Activated CD4-positive, alpha-beta memory T cell treated with anti-CD3 and anti-CD28 coated beads for 36 hours (primary cell): ENCODE measurements at regions of chr5 and their contacts with region 1.

Region 1: DNA sequence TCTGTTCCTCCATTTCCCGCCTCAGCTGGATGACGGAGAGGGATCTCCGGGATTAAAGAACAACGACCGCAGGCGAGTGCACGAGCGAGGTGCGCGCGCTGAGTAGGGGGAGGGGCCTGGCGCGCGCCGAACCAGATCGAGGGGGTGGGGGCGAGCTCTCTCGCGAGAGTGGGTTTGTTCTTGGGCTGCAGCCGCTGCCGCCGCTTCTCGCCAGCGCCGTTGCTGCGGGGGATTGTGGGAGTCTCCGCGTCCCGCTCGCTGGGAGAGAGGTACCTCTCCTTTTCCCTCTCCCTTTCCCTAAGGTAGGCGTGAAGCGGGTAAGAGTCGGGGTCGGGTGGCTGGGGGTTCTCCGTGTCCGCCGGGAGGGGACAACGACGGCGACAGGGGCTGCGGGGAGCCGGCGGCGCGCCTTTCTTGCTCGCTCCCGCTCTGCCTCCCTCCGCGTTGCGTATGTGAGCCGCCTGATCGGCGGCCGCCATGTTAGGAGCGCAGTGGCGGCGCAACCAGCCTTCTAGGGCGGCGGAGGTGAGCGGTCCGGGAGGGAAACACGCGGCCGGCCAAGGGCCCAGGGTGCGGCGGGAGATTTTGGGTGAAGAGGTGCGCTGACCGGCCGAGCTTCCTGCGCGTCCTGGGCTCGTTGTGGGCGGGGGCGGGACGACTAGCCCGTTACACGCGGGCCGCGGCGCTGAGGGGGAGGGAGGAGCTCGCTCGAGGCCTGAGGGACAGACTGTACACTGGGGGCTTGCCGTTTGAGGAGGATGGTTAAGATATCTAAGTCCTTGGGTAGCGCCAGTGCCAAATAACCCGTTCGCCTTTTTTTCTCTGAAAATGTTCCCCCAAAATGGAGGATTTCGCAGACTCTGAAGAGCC is at the start of gene MATR3:
- DNase-seq: peak; percentile 96
- H3K4me3 Mint-ChIP-seq: peak within 1 kb of the TSS; percentile 95
- H3K27ac Mint-ChIP-seq: peak within 1 kb of the TSS; percentile 98
- H3K4me1 Mint-ChIP-seq: peaks cover 31% of the 10 kb centered on the region
- H3K27me3 Mint-ChIP-seq: no peaks in the 10 kb centered on the region
- total RNA-seq, gene MATR3: 163 to 179 TPM

Region 2: DNA sequence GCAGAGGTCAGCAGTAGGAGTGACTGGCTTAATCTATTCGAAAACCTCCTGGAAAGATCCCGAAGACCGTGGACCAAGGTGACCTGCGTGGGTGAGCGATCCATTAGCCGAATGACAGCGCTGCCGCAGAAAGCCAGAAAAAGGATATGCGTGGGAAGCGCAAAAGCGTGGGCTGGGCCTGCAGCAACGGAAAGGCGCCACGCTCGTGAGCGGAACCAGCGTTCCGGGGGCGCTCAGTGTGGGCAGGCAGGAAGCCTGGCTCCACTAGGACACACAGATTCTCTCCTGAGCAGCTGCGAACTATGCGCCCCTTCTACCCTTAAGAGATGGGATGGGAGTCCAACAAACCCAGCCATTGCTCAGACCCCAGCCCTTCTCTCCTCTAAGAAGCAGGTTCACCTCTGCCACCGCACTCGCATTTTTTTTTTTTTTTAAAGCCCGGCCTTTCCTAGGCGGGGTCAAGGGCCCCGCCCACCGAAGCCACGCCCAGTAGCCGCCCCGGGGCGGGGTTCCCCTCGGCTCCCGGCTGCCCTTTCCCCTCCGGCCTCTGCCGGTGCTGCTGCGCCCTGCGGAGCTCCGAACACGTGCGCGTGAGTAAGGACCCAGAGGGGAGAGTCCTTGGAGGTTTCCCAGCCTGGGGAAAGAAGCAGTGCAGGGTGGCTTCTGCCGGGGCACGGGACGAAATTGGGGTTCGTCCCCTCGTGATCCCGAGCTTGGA is 20.0 kb before region 1 on chr5:
- CTCF ChIA-PET with region 1: interaction called, 5 read pairs
- POLR2A ChIA-PET with region 1: interaction called, 112 read pairs
- intact Hi-C with region 1: loop called (anchors 1 kb)
- DNase-seq: peak; percentile 93
- H3K4me3 Mint-ChIP-seq: peak overlapping the region; percentile 96
- H3K27ac Mint-ChIP-seq: peak overlapping the region; percentile 89
- H3K4me1 Mint-ChIP-seq: peaks cover 60% of the 10 kb centered on the region
- H3K27me3 Mint-ChIP-seq: peaks cover 2% of the 10 kb centered on the region

Region 3: DNA sequence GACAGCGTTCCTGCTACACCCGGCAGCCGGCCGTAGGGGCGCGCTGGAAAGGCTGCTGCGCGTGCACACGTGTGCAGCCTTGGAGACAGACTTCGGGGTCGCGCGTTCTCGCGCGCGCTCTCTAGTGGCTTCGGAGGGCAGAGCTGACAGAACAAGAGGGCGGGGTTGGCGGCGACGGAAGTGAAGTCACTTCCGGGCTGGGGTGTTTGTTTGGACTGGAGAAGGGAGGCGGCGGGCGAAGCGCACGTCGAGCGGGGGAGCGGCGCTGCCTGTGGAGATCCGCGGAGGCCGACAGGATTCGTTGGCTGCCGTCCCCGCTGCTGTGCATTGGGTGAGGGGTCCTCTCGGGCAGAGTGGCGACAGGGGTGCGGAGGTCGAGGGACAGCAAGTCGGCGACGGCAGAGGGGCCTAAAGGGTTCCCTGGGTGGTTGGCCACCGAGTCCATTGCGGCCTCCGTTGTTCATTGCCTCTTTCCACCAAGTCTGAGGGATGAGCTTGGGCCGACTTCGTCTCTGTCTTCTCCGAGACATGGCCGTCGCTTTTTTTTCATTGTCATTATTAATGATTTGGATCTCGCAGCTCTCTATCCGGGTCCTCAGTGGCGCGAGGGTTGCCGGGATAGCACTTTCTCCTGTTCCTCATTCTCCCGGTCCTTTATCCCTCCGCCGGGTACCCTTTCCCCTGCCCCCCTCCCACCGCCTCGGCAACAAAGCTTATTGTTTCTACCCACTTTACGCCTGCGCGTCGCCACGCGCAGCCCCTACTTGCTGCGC is 48.1 kb after region 1 on chr5 and contains the start of gene PAIP2:
- CTCF ChIA-PET with region 1: interaction called, 6 read pairs
- POLR2A ChIA-PET with region 1: interaction called, 23 read pairs
- intact Hi-C with region 1: loop called (anchors 1 kb)
- DNase-seq: peak; percentile 98
- H3K4me3 Mint-ChIP-seq: peak within 1 kb of the TSS; percentile 97
- H3K27ac Mint-ChIP-seq: peak within 1 kb of the TSS; percentile 95
- H3K4me1 Mint-ChIP-seq: peaks cover 46% of the 10 kb centered on the region
- H3K27me3 Mint-ChIP-seq: no peaks in the 10 kb centered on the region
- total RNA-seq, gene PAIP2: 104 to 110 TPM